Activated CD4-positive, alpha-beta memory T cell treated with anti-CD3 and anti-CD28 coated beads for 36 hours (primary cell): ENCODE measurements at regions of chr9 and their contacts with region 1.

Region 1: DNA sequence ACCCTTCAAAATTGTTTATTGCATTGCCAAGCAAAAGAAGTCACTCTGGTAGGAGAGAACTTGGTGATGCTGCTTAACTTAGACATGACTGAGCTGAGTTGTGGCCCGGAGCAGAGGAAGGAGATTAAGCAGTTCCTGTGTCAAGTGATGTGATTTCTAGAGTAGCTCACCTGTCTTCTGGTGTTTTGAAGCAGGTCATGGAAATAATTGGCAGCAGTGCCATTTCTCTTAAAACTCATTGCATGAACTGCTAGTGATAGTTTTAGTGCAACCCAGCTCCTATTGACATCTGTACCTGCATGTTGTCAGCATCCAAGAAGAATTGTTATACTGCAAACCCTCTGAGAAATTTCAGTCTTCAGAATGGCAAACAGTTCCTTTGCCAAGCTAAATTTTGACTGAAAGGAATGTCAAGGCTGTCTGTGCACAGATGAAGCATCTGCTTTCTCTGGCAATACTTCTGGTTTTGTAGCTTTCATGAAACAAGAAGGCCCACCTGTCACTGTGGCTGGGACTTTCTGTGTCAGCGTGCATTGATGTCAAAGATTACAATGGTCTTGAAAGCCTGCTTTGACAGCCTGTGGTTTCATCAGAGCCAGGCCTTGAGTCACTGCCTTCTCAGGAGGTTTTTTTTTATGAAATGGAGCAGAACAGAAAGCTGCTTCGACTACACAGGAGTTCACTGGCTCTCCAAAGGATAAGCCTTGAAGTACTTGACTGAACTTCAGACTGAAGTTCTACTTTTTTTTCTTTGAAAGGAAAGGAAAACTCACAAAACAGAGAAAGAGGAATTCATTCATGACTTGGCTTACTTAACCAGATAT is 90.6 kb downstream of the RALGPS1 start:
- DNase-seq: peak; percentile 88
- H3K4me3 Mint-ChIP-seq: no peak overlapping the region
- H3K27ac Mint-ChIP-seq: peak overlapping the region; percentile 57
- H3K4me1 Mint-ChIP-seq: peaks cover 23% of the 10 kb centered on the region
- H3K27me3 Mint-ChIP-seq: peaks cover 25% of the 10 kb centered on the region

Region 2: DNA sequence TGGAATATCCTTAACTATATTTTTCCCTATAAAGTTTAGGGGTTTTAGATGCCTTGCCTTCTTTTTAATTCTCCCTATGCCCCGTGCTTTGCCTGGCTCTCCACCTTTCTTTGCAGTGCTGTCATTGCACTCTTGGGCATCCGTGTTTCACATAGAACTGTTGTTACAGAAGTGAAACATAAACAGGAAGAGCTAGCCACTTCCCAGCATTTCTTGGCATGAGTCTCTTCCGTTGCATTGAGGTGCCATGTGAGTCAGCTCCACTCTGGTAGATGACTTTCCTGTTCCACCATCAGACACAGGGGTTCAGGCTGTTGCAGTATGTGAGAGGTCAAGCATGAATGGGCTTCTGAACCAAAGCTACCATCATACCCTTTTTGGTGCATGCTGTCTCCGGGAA is 43.9 kb after region 1 on chr9:
- CTCF ChIA-PET with region 1: interaction called, 5 read pairs
- POLR2A ChIA-PET with region 1: no interaction called
- intact Hi-C with region 1: loop called (anchors 1 kb)
- DNase-seq: peak; percentile 66
- H3K4me3 Mint-ChIP-seq: no peak overlapping the region
- H3K27ac Mint-ChIP-seq: peak overlapping the region; percentile 8
- H3K4me1 Mint-ChIP-seq: peaks cover 27% of the 10 kb centered on the region
- H3K27me3 Mint-ChIP-seq: no peaks in the 10 kb centered on the region

Region 3: GRCh38 chr9:127154390-127155191 is 149.4 kb after region 1 on chr9:
- CTCF ChIA-PET with region 1: interaction called, 5 read pairs
- POLR2A ChIA-PET with region 1: interaction called, 6 read pairs
- intact Hi-C with region 1: loop called (anchors 1 kb)
- DNase-seq: peak; percentile 70
- H3K4me3 Mint-ChIP-seq: no peak overlapping the region
- H3K27ac Mint-ChIP-seq: peak overlapping the region; percentile 9
- H3K4me1 Mint-ChIP-seq: peaks cover 21% of the 10 kb centered on the region
- H3K27me3 Mint-ChIP-seq: peaks cover 9% of the 10 kb centered on the region

Region 4: GRCh38 chr9:127370672-127371648 is 365.8 kb after region 1 on chr9:
- CTCF ChIA-PET with region 1: no interaction called
- POLR2A ChIA-PET with region 1: no interaction called
- intact Hi-C with region 1: no loop called
- DNase-seq: no peak
- H3K4me3 Mint-ChIP-seq: no peak overlapping the region
- H3K27ac Mint-ChIP-seq: no peak overlapping the region
- H3K4me1 Mint-ChIP-seq: no peaks in the 10 kb centered on the region
- H3K27me3 Mint-ChIP-seq: peaks cover 58% of the 10 kb centered on the region